Mammary epithelial cell (primary cell): ENCODE measurements at regions of chr12 and their contacts with region 1.

Region 1: GRCh38 chr12:32947206-32948067 is 50.9 kb upstream of the PKP2 start:
- DNase-seq: peak; percentile 34
- H3K4me3 ChIP-seq: no peak overlapping the region
- H3K27ac ChIP-seq: no peak overlapping the region
- H3K4me1 ChIP-seq: peaks cover 11% of the 10 kb centered on the region
- H3K27me3 ChIP-seq: no peaks in the 10 kb centered on the region
- CTCF ChIP-seq: peak; percentile 10 to 36

Region 2: DNA sequence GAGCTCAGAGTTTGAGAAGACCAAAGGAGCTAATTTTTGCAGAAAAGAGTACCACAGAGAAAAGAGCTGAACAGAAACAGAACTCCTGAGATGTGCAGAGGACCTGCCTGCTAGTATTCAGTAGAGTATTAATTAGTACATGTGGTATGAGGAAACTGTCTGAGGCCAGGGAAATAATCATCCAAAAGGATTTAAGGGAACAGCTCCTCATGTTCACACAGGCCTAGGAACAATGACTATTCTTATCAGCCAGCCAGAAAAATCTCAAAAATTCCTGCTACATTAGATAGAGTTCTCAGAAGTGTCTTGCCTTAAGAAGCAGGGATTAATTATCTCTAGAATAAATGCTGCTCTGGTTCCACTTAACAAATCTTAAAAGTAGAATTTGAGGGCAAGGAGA is 87.3 kb before region 1 on chr12:
- CTCF ChIA-PET with region 1: no interaction called
- dilution Hi-C with region 1: no loop called
- in situ Hi-C with region 1: no loop called
- intact Hi-C with region 1: no loop called
- DNase-seq: peak; percentile 38
- H3K4me3 ChIP-seq: no peak overlapping the region
- H3K27ac ChIP-seq: no peak overlapping the region
- H3K4me1 ChIP-seq: peaks cover 13% of the 10 kb centered on the region
- H3K27me3 ChIP-seq: no peaks in the 10 kb centered on the region
- CTCF ChIP-seq: no peak

Region 3: DNA sequence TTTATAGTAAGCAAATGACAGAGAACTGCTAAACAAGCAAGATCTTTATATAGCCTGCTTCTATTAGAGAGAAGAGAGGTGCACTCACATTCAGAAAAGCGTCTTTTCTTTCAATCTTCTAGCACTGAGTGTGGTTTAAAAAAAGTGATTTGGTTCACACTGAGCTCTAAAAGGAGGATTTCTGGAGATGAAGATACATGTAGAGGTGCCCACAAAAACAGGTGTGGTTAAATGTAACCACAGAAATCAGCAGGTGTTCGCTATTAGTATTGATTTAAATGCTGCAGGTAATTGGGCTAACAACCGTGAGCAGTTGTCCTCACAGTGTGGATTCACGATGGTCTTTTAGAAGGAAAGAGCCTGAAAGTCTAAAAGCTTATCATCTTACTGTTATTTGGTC is 61.6 kb before region 1 on chr12:
- CTCF ChIA-PET with region 1: no interaction called
- dilution Hi-C with region 1: no loop called
- in situ Hi-C with region 1: no loop called
- intact Hi-C with region 1: no loop called
- DNase-seq: no peak
- H3K4me3 ChIP-seq: no peak overlapping the region
- H3K27ac ChIP-seq: no peak overlapping the region
- H3K4me1 ChIP-seq: peaks cover 13% of the 10 kb centered on the region
- H3K27me3 ChIP-seq: no peaks in the 10 kb centered on the region
- CTCF ChIP-seq: no peak

Region 4: GRCh38 chr12:32896432-32897273 is 50.8 kb before region 1 on chr12 and contains the start of gene PKP2:
- CTCF ChIA-PET with region 1: no interaction called
- dilution Hi-C with region 1: no loop called
- in situ Hi-C with region 1: no loop called
- intact Hi-C with region 1: loop called (anchors 1 kb)
- DNase-seq: peak; percentile 98
- H3K4me3 ChIP-seq: peak within 1 kb of the TSS; percentile 66 to 97 (median 85)
- H3K27ac ChIP-seq: peak within 1 kb of the TSS; percentile 83
- H3K4me1 ChIP-seq: peaks cover 44% of the 10 kb centered on the region
- H3K27me3 ChIP-seq: no peaks in the 10 kb centered on the region
- CTCF ChIP-seq: no peak
- total RNA-seq, gene PKP2: 42.3 to 42.8 TPM

Region 5: GRCh38 chr12:32918890-32919801 is 28.3 kb before region 1 on chr12:
- CTCF ChIA-PET with region 1: no interaction called
- dilution Hi-C with region 1: no loop called
- in situ Hi-C with region 1: no loop called
- intact Hi-C with region 1: loop called (anchors 2 kb)
- DNase-seq: peak; percentile 90
- H3K4me3 ChIP-seq: no peak overlapping the region
- H3K27ac ChIP-seq: peak overlapping the region; percentile 96
- H3K4me1 ChIP-seq: peaks cover 47% of the 10 kb centered on the region
- H3K27me3 ChIP-seq: no peaks in the 10 kb centered on the region
- CTCF ChIP-seq: peak; percentile 55 to 60

Region 6: DNA sequence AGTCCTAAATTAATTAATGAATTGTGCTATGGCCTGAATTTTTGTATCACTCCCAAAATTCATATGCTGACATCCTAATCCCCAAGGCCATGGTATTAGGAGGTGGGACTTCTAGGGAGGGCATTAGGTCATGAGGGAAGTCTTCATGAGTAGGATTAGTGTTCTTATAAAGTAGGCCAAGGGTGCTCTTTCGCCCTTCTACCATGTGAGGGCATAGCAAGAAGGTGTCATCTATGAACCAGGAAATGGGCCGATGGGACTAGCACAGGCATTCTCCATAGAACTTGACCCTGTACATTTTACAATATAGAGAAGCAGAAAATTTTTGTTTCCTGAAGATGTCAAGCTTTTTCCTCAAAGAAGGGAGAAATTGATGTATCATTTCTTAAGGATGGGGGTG is 479.6 kb after region 1 on chr12:
- CTCF ChIA-PET with region 1: no interaction called
- dilution Hi-C with region 1: no loop called
- in situ Hi-C with region 1: no loop called
- intact Hi-C with region 1: loop called (anchors 10 kb)
- DNase-seq: peak; percentile 45
- H3K4me3 ChIP-seq: no peak overlapping the region
- H3K27ac ChIP-seq: no peak overlapping the region
- H3K4me1 ChIP-seq: no peaks in the 10 kb centered on the region
- H3K27me3 ChIP-seq: peaks cover 2% of the 10 kb centered on the region
- CTCF ChIP-seq: peak; percentile 50 to 63

Region 7: DNA sequence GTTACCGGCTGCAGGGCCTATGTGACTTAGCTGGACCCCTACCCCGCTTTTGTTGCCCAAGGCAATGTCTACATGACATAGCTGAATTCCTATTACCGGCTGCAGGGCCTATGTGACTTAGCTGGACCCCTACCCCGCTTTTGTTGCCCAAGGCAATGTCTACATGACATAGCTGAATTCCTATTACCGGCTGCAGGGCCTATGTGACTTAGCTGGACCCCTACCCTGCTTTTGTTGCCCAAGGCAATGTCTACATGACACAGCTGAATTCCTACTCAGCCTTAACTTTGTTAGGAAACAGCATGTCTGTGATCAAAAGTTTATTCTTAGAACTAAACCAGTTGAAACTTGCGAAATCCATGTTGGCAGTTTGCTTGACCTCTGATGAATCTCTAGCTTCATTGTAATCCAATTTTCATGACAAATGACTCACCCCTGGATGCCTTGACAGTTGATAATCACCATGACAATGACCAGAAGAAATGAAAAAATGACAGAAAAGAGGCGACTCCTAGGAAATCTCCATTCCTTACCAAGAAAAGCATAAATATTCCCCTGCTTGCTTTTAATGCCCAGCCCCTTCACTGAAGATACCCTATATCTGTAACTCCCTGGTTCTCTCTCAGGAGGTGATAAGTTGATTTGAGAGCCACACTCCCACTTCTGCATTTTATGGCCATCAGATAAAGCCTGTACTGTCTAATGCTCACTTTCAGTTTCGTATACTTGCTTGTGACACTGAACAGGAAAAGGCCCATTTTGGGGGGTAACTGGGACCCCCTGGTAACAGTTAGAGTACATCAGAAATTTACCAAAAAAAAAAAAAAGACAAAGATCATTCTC is 640.7 kb after region 1 on chr12:
- CTCF ChIA-PET with region 1: no interaction called
- dilution Hi-C with region 1: no loop called
- in situ Hi-C with region 1: loop called in 1 of 2 experiments (anchors 25 kb)
- intact Hi-C with region 1: no loop called
- DNase-seq: peak; percentile 93
- H3K4me3 ChIP-seq: no peak overlapping the region
- H3K27ac ChIP-seq: peak overlapping the region; percentile 78
- H3K4me1 ChIP-seq: peaks cover 26% of the 10 kb centered on the region
- H3K27me3 ChIP-seq: no peaks in the 10 kb centered on the region
- CTCF ChIP-seq: no peak

Region 8: GRCh38 chr12:33605751-33606150 is 658.3 kb after region 1 on chr12:
- CTCF ChIA-PET with region 1: no interaction called
- dilution Hi-C with region 1: no loop called
- in situ Hi-C with region 1: no loop called
- intact Hi-C with region 1: loop called (anchors 1 kb)
- DNase-seq: peak; percentile 30
- H3K4me3 ChIP-seq: no peak overlapping the region
- H3K27ac ChIP-seq: no peak overlapping the region
- H3K4me1 ChIP-seq: no peaks in the 10 kb centered on the region
- H3K27me3 ChIP-seq: no peaks in the 10 kb centered on the region
- CTCF ChIP-seq: peak; percentile 51 to 71